PC-9 (cell line): ENCODE measurements at regions of chr19 and their contacts with region 1.

Region 1: GRCh38 chr19:572140-572742 is at the start of gene BSG:
- DNase-seq: peak; percentile 90 to 98
- H3K4me3 ChIP-seq: peak within 1 kb of the TSS; percentile 97
- H3K27ac ChIP-seq: peak within 1 kb of the TSS; percentile 64
- H3K4me1 ChIP-seq: peaks cover 32% of the 10 kb centered on the region
- H3K27me3 ChIP-seq: no peaks in the 10 kb centered on the region
- CTCF ChIP-seq: no peak
- total RNA-seq, gene BSG: 772 and 823 TPM in 2 replicates

Region 2: DNA sequence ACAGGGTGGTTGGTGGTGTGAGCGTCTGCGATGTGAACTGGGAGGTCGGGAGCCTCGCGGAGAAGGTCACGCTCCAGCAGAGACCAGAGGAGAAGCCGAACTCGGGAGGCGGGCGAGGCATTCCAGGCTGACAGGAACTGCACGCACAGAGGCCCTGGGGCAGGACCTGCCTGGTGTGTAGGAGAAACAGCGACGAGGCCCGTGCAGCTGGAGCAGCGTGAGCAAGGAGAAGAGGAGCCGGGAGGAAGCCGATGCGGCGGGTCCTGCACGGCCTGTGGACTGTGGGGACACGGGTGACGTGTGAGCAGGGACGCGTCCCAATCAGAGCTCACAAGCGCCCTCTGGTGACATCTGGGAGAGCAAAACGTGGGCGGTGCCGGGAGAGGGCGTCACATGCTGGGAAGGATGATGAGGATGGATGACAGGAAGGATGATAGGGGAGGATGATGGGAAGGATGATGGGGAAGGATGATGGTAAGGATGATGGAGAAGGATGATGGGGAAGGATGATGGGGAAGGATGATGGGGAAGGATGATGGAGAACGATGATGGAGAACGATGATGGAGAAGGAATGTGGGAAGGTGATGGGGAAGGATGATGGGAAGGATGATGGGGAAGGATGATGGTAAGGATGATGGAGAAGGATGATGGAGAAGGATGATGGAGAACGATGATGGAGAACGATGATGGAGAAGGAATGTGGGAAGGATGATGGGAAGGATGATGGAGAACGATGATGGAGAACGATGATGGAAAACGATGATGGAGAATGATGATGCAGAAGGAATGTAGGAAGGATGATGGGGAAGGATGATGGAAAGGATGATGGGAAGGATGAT is 92.0 kb before region 1 on chr19:
- CTCF ChIA-PET with region 1: no interaction called
- POLR2A ChIA-PET with region 1: no interaction called
- intact Hi-C with region 1: no loop called
- DNase-seq: peak in 1 of 2 experiments; percentile 41
- H3K4me3 ChIP-seq: no peak overlapping the region
- H3K27ac ChIP-seq: no peak overlapping the region
- H3K4me1 ChIP-seq: no peaks in the 10 kb centered on the region
- H3K27me3 ChIP-seq: no peaks in the 10 kb centered on the region
- CTCF ChIP-seq: peak; percentile 28; the same call in 1 of the 2 replicates

Region 3: DNA sequence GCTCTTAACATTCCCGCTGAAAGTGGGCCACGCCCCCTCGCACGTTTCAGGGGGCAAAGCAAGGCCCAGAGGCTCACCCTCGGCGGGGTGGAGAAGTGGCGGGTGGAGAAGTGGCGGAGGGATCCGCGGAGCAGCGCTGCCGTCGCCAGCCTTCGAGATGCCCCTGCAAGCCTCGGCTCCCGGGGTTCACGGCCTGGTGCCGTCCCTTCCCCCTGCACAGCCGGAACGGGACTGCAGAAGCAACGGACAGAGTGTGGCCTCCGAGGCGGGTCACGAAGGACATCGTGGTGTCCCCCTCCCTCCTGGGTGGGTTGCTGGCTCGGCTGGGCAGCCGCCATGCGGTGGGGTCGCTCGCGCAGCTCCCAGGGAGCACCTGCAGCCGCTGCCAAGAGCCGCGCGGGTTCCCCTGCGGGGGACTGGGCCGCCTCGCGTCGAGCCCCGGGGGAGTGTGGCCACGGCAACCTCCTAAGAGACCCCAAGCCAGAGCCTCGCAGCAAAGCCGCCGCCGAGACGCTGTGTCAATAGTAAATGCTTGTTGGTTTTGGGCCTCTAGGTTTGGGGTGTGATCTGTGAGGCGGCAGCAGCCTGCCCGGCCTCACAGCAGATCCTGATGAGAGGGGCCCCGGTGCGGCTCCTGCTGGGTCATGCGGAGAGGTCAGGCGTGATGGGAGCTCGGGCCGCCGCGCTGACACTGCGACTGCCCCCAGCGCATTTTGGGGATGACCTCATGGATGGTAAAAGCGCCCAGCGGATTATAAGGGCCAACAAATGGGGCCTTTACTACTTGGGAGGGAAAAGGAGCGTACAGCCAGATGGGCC is 59.5 kb before region 1 on chr19:
- CTCF ChIA-PET with region 1: no interaction called
- POLR2A ChIA-PET with region 1: no interaction called
- intact Hi-C with region 1: no loop called
- DNase-seq: no peak
- H3K4me3 ChIP-seq: no peak overlapping the region
- H3K27ac ChIP-seq: no peak overlapping the region
- H3K4me1 ChIP-seq: no peaks in the 10 kb centered on the region
- H3K27me3 ChIP-seq: no peaks in the 10 kb centered on the region
- CTCF ChIP-seq: no peak

Region 4: DNA sequence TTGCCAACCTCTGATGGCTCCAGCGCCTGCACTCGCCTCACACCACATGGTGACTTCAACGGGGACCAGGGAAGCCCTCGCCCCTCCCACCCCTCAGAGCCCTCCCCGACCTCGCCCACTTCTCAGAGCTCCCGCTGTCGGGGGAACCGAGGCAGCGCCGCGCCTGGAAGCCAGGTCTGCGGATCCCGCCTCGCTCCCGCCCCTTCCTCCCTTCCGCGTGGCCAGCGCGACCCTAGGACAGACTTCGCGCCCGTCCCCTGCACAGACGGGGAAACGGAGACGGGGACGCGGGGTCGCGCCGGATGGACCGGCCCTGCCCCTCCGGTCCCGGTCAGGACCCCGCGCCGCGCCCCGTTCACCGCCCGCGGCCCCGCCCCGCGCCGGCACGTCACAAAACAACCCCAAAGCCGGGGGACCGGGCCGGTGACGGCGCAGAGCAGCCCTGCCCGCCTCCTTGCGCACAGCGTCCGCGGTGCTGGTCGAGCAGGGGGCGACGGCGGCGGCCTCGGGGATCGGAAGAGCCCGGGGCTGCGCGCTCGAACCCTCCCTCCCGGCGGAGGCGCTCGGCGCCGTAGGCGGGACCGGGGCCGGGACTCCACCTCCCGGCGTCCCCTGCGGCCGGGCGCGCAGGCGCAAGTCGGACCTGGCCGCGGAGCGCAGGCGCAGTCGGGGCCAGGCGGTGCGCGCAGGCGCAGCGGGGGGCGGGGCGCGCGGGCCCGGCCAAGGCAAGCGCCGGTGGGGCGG is 41.1 kb before region 1 on chr19:
- CTCF ChIA-PET with region 1: no interaction called
- POLR2A ChIA-PET with region 1: interaction called, 4 read pairs
- intact Hi-C with region 1: loop called (anchors 1 kb)
- DNase-seq: peak; percentile 58 to 93
- H3K4me3 ChIP-seq: peak overlapping the region; percentile 86
- H3K27ac ChIP-seq: peak overlapping the region; percentile 38
- H3K4me1 ChIP-seq: peaks cover 48% of the 10 kb centered on the region
- H3K27me3 ChIP-seq: no peaks in the 10 kb centered on the region
- CTCF ChIP-seq: no peak

Region 5: DNA sequence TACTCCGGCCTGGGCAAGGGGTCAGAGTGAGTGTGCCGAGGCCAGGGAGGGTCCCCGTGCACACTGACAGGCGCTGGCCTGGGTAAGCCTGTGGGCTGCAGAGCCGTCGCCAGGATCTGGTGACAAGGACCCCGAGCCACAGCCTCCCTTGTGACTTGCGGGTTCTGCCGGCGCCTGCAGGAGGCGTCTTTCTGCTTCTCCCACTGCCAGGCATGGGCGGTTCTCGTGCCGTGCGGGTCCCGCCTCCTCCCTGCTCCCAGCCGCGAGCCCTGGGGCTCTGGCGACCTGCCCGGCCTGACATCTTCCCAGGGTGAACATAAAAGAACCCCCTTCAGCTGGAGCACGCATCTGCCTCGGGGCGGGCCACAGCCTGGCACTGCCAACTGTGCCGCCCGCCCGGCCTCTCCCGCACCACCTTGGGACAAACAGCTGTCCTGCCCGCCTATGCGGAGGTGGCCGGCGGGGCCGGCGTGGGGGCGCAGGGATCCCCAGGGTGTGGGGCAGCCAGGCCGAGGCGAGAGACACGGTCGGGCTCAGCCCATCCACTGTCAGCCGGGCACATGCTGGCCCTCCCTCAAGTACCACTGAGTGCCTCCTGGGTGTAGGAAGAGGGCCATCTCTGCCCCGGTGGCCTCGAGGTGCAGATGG is 16.0 kb after region 1 on chr19:
- CTCF ChIA-PET with region 1: no interaction called
- POLR2A ChIA-PET with region 1: interaction called, 24 read pairs
- intact Hi-C with region 1: no loop called
- DNase-seq: peak; percentile 75 to 92
- H3K4me3 ChIP-seq: peak overlapping the region; percentile 9; the same call in 1 of the 2 replicates
- H3K27ac ChIP-seq: no peak overlapping the region
- H3K4me1 ChIP-seq: peaks cover 15% of the 10 kb centered on the region; the same call in 1 of the 2 replicates
- H3K27me3 ChIP-seq: peaks cover 11% of the 10 kb centered on the region; the same call in 1 of the 2 replicates
- CTCF ChIP-seq: peak; percentile 69

Region 6: GRCh38 chr19:608155-609000 is 36.1 kb after region 1 on chr19:
- CTCF ChIA-PET with region 1: no interaction called
- POLR2A ChIA-PET with region 1: interaction called, 28 read pairs
- intact Hi-C with region 1: no loop called
- DNase-seq: no peak
- H3K4me3 ChIP-seq: no peak overlapping the region
- H3K27ac ChIP-seq: no peak overlapping the region
- H3K4me1 ChIP-seq: no peaks in the 10 kb centered on the region
- H3K27me3 ChIP-seq: no peaks in the 10 kb centered on the region
- CTCF ChIP-seq: no peak

Region 7: GRCh38 chr19:677201-677600 is 105.0 kb after region 1 on chr19:
- CTCF ChIA-PET with region 1: no interaction called
- POLR2A ChIA-PET with region 1: interaction called, 20 read pairs
- intact Hi-C with region 1: no loop called
- DNase-seq: peak; percentile 70 to 92
- H3K4me3 ChIP-seq: peak overlapping the region; percentile 72
- H3K27ac ChIP-seq: peak overlapping the region; percentile 43; the same call in 1 of the 2 replicates
- H3K4me1 ChIP-seq: peaks cover 30% of the 10 kb centered on the region
- H3K27me3 ChIP-seq: no peaks in the 10 kb centered on the region
- CTCF ChIP-seq: no peak

Region 8: DNA sequence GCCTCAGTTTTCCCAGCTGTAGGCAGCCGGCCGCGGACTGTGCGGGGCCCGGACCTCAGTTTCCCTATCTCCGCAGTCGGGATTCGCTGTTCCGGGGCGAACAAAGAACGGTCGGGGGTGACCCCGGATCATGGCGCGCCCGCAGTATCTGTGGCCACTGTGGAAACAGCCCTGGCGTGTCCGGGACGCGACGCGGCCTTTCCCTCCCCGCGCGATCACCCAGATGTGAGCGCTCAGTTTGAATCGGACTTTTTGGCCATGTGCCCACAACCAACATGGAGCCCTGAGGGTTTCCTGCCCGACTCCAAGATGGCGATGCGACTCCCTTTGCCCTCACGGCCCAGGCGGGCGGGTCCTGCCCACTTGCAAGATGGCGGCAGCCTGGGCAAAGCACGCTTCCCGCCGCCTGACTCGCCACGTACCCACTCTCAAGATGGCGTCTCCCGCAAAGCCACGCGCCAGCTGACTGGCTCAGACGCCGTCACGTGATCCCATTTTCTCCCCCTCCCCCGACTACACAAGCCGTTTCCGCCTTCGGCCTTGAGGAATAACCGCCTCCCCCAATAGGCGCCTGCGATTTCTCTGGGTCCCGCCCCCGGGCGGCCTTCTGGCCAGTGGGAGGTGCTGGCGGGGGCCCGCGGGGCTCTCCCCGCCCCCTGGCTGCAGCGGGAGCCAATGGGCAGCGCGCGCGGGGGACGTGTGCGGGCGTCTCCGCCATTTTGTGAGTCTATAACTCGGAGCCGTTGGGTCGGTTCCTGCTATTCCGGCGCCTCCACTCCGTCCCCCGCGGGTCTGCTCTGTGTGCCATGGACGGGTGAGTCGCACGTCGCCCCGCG is 224.7 kb after region 1 on chr19 and contains the start of gene PTBP1:
- CTCF ChIA-PET with region 1: no interaction called
- POLR2A ChIA-PET with region 1: no interaction called
- intact Hi-C with region 1: loop called (anchors 2 kb)
- DNase-seq: peak; percentile 98 to 99
- H3K4me3 ChIP-seq: peak within 1 kb of the TSS; percentile 78
- H3K27ac ChIP-seq: peak within 1 kb of the TSS; percentile 85
- H3K4me1 ChIP-seq: peaks cover 23% of the 10 kb centered on the region
- H3K27me3 ChIP-seq: no peaks in the 10 kb centered on the region
- CTCF ChIP-seq: no peak
- total RNA-seq, gene PTBP1: 461 and 542 TPM in 2 replicates

Region 9: GRCh38 chr19:835210-835810 is 263.1 kb after region 1 on chr19:
- CTCF ChIA-PET with region 1: no interaction called
- POLR2A ChIA-PET with region 1: no interaction called
- intact Hi-C with region 1: no loop called
- DNase-seq: no peak
- H3K4me3 ChIP-seq: no peak overlapping the region
- H3K27ac ChIP-seq: no peak overlapping the region
- H3K4me1 ChIP-seq: no peaks in the 10 kb centered on the region
- H3K27me3 ChIP-seq: peaks cover 21% of the 10 kb centered on the region
- CTCF ChIP-seq: no peak

Region 10: GRCh38 chr19:925526-926322 is 353.5 kb after region 1 on chr19 and contains the start of gene ARID3A:
- CTCF ChIA-PET with region 1: no interaction called
- POLR2A ChIA-PET with region 1: no interaction called
- intact Hi-C with region 1: loop called (anchors 10 kb)
- DNase-seq: peak; percentile 53 to 80
- H3K4me3 ChIP-seq: peak within 1 kb of the TSS; percentile 77
- H3K27ac ChIP-seq: no peak within 1 kb of the TSS
- H3K4me1 ChIP-seq: no peaks in the 10 kb centered on the region; the same call in 1 of the 2 replicates
- H3K27me3 ChIP-seq: no peaks in the 10 kb centered on the region; the same call in 1 of the 2 replicates
- CTCF ChIP-seq: no peak
- total RNA-seq, gene ARID3A: 9.2 and 10.7 TPM in 2 replicates